Panc1 (cell line): ENCODE measurements at regions of chr11 and their contacts with region 1.

Region 1: DNA sequence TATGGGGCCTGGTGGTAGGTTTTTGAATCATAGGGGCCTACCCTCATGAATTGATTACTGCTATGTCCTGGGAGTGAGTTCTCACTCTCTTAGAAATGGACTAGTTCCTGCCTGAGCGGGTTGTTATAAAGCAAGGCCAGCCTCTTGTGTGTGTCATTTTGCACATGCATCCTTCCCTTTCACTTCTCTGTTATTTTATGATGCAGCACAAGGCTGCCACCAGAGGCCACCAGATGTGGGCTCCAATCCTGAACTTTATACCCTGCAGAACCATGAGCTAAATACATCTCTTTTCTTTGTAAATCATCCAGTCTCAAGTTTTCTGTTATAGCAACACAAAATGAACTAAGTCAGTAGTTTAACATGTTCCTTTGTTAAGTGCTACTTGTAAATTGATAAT is 251.4 kb downstream of the BLID start:
- DNase-seq: no peak
- ATAC-seq: no peak
- H3K4me3 ChIP-seq: no peak overlapping the region
- H3K27ac ChIP-seq: no peak overlapping the region
- H3K4me1 ChIP-seq: no peaks in the 10 kb centered on the region
- H3K27me3 ChIP-seq: no peaks in the 10 kb centered on the region
- CTCF ChIP-seq: peak; percentile 17; the same call in 1 of the 2 replicates

Region 2: GRCh38 chr11:121630041-121630440 is 234.6 kb before region 1 on chr11:
- CTCF ChIA-PET with region 1: no interaction called
- POLR2A ChIA-PET with region 1: no interaction called
- in situ Hi-C with region 1: no loop called
- intact Hi-C with region 1: no loop called
- DNase-seq: no peak
- ATAC-seq: 0 out of 2 replicates have a peak, but pooled peaks have one; percentile 58
- H3K4me3 ChIP-seq: no peak overlapping the region
- H3K27ac ChIP-seq: no peak overlapping the region
- H3K4me1 ChIP-seq: no peaks in the 10 kb centered on the region
- H3K27me3 ChIP-seq: no peaks in the 10 kb centered on the region
- CTCF ChIP-seq: no peak

Region 3: GRCh38 chr11:121688860-121689614 is 175.6 kb before region 1 on chr11:
- CTCF ChIA-PET with region 1: no interaction called
- POLR2A ChIA-PET with region 1: interaction called, 17 read pairs
- in situ Hi-C with region 1: no loop called
- intact Hi-C with region 1: no loop called
- DNase-seq: no peak
- ATAC-seq: no peak
- H3K4me3 ChIP-seq: no peak overlapping the region
- H3K27ac ChIP-seq: no peak overlapping the region
- H3K4me1 ChIP-seq: no peaks in the 10 kb centered on the region
- H3K27me3 ChIP-seq: no peaks in the 10 kb centered on the region
- CTCF ChIP-seq: no peak